ENCODE measurements at regions of chr10 and their contacts with region 1.

Region 1: DNA sequence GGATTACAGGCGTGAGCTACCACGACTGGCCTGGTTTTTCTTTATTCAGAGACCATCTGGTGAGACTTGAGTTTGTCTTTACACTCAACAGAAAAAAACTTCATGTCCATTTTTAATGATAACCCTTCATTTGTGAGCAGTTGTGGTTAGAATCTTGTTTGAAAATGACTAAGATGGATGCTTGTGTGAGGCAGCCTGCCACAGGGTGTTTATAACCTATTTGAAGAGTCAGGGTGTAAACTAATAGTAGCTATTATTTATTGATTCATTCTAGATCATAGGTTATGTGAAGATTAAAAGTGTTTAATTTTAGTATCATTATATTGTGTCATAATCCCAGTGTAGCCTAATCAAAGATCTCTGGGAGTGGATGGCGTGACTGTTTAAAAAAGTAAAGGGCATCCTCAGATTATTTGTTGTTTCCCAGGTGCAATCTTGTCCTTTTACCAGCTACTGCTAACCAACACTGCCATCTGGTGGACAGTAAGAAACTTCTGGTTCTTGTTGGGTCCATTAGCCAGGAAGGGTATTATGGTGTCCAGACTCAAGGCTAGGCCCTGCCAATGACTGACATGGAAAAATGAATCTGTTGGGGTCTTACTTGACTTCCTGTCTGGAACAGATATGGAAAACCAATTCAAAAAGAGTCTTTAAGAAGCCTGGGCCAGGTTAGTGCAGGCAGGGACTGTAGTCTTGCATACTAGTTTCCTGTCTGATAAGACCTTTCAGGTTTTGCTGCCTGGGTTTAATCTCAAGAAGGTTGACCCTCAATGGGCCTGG is 24.9 kb downstream of the NRBF2 start:
- DNase-seq: no peak
- ATAC-seq: peak; percentile 78

Region 2: DNA sequence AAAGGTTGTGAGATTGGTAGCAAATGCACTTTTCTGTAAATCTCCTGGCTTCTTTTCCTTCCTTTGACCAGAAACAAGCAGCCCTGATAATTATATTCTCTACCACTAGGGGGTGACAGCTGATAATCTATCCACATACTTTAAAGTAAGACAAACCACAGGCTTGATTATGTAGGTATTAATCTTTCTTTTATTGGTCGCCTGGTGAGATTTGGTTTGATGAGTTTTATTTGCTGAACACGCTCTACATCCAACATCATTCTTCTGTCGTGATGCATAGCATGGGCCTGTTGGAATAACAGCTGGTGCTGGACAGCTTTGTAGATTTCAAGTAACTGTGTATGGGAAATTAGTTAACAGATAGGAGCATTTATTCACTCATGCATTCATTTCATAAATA is 720.3 kb before region 1 on chr10:
- intact Hi-C with region 1: loop called (anchors 5 kb)
- DNase-seq: no peak
- ATAC-seq: peak; percentile 70

Region 3: GRCh38 chr10:62594093-62594520 is 563.9 kb before region 1 on chr10:
- intact Hi-C with region 1: loop called (anchors 5 kb)
- DNase-seq: peak; percentile 74
- ATAC-seq: peak; percentile 92

Region 4: DNA sequence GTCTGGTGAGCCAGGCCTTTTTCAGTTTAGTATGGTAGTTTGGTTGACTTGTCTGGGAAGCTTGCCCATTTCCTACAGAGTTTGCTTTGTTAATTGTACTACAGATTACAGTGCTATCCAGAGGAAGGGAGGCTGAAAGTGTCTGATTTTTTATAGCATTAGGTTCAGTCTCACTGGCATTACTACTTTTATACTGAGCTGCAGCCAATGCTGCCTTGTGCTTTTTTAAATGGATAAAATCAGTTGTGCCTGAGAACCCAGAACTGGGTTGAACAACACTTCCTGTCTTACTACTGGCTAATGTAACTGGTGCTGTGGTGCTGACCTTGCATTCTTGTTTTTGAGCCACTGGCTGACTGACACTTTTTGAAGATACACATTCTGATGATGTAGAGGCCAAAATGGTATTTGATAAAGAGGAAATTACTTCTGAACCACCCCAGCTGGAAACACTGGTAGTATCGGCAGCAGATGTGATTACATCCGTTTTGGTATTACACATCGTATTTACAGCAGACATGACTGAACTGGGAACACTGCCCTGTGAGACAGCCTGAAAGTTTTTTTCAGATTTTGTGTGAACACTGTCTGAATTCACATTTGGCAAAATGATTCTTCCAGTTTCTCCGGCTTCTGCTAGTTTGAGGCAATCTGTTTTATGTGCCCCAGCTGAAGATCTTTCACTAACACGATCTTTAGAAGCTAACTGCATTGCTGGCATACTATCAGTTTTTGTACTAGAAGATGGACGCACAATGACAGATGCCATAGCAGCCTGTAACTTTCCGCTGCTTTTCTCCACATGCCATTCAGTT is 49.2 kb after region 1 on chr10:
- intact Hi-C with region 1: no loop called
- DNase-seq: no peak
- ATAC-seq: peak; percentile 78